ENCODE measurements at regions of chr11 and their contacts with region 1.

Region 1: DNA sequence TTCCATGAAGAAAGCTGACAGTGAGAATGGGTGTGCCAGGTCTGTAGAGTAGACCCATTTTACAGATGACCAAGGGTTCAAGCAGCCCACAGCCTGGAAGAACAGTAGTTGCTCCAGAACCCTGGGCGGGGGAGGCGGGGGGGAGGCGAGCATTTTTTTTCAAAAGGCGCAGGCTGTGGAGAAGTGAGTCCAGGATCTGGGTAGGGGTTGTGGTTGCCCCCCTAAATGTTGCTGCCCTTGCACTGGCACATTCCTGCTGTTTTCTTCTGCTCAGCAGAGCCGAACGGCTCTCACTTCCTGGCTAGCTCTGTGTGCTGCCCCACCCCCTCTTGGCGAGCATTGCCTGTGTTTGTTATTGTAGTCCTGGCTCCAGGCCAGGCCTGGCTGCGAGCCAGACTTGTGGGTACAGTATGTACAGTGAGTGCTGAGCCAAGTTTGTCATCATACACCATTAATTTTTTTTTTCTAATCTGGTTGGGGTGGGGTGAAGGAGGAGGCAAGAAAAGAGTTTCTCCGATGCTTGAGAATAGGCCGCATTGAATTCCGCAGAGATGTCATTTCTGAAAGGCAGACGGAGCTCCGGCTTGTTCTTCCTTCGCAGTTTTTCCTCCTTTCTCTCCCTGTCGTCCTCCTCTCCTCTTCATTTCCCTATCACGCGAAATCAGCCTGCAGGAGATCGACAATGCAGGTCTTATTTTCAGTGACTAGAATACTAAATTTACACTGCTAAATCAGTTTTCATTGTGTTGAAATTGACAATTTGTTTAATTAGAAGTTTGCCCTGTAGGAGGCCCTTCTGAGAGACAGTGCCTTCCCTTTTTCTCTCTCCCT is 100.5 kb downstream of the ZBTB16 start:
- DNase-seq: peak; percentile 86 to 97 (median 90)
- H3K4me3 ChIP-seq: peak overlapping the region in 45 of 59 donors; percentile 1 to 48 (median 27)
- H3K27ac ChIP-seq: peak overlapping the region; percentile 97 to 100 (median 100)
- H3K27me3 ChIP-seq: no peaks in the 10 kb centered on the region
- CTCF ChIP-seq: peak in 23 of 56 donors; percentile 5 to 32 (median 19)

Region 2: DNA sequence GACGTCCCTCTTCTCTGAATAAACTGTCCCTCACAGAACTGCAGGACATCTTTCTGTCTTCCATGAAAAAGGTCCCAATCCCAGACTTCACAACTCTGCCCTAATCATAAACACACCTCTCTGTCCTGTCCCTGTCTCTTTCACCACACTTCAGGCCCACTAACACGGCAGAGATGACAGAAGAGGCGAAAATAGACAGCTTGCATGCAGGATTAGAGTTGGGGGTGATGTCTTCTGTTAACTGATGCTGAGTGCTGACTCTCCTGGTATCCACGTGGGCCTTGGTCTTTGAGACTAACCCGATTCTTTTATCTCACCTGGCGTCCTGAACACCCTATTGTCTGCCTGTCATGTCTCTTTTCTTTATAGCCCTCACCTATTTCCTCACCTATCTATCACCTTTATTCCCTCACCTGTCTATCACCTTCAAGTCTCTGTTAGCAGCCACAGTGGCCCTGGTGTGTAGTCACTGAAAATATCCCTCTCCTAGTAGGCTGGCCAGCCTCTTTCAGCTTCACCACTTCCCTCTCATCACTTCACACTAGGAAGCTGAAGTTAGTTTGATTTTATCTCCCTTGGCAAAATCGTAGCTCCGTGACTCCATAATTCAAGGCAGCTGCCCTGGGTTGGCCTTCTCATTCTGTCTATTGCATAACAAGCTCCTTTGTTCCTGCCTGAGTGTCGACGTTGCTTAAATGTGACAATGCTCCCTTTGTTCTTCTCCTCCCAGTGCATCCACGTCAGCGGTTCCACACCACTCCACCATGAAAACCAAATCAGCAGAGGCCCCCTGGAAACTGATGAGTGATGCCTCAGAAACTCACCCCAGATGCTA is 654.3 kb before region 1 on chr11:
- intact Hi-C with region 1: no loop called
- DNase-seq: peak in 8 of 10 donors; percentile 33 to 76 (median 52)
- H3K4me3 ChIP-seq: peak overlapping the region in 3 of 59 donors; percentile 12 to 27 (median 21)
- H3K27ac ChIP-seq: peak overlapping the region in 57 of 59 donors; percentile 2 to 91 (median 71)
- H3K27me3 ChIP-seq: no peaks in the 10 kb centered on the region
- CTCF ChIP-seq: peak in 3 of 56 donors; percentile 11 to 19 (median 16)

Region 3: DNA sequence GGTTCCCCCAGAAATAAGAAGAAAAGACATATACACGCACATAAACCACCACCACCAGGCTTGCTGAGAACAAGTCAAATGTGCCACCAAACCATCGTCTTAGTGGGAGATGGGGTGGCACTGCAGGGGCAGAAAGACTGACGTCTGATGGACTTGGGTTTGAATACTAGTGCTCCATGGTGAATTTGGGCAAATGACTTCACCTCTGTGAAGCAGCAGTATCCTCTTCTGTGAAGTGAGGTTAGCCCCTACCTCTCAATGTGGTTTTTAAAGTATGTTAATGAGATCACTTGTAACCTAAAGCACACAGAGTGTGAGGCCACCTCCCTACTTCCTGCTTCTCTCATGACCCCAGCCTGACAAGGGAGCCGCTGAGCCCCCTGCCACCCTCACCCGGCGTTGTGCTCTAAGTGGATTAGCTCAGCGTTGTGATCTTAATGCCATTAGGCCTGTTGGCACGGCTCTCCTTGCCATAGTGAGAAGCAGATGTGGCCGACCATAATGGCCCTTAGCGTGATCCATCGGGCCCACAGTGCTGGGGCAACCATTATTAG is 86.1 kb before region 1 on chr11:
- intact Hi-C with region 1: no loop called
- DNase-seq: no peak
- H3K4me3 ChIP-seq: peak overlapping the region in 39 of 59 donors; percentile 0 to 52 (median 30)
- H3K27ac ChIP-seq: peak overlapping the region in 54 of 59 donors; percentile 7 to 93 (median 60)
- H3K27me3 ChIP-seq: no peaks in the 10 kb centered on the region
- CTCF ChIP-seq: no peak

Region 4: GRCh38 chr11:114135737-114136151 is 24.3 kb before region 1 on chr11:
- intact Hi-C with region 1: loop called in 1 of 2 experiments (anchors 2 kb)
- DNase-seq: peak in 1 of 10 donors; percentile 35
- H3K4me3 ChIP-seq: peak overlapping the region in 3 of 59 donors; percentile 2 to 34 (median 3)
- H3K27ac ChIP-seq: peak overlapping the region in 50 of 59 donors; percentile 1 to 94 (median 70)
- H3K27me3 ChIP-seq: no peaks in the 10 kb centered on the region
- CTCF ChIP-seq: no peak

Region 5: GRCh38 chr11:114228435-114229411 is 68.7 kb after region 1 on chr11:
- intact Hi-C with region 1: no loop called
- DNase-seq: peak in 3 of 10 donors; percentile 30 to 50 (median 42)
- H3K4me3 ChIP-seq: peak overlapping the region in 15 of 59 donors; percentile 1 to 38 (median 14)
- H3K27ac ChIP-seq: peak overlapping the region in 51 of 59 donors; percentile 0 to 78 (median 48)
- H3K27me3 ChIP-seq: no peaks in the 10 kb centered on the region
- CTCF ChIP-seq: no peak

Region 6: DNA sequence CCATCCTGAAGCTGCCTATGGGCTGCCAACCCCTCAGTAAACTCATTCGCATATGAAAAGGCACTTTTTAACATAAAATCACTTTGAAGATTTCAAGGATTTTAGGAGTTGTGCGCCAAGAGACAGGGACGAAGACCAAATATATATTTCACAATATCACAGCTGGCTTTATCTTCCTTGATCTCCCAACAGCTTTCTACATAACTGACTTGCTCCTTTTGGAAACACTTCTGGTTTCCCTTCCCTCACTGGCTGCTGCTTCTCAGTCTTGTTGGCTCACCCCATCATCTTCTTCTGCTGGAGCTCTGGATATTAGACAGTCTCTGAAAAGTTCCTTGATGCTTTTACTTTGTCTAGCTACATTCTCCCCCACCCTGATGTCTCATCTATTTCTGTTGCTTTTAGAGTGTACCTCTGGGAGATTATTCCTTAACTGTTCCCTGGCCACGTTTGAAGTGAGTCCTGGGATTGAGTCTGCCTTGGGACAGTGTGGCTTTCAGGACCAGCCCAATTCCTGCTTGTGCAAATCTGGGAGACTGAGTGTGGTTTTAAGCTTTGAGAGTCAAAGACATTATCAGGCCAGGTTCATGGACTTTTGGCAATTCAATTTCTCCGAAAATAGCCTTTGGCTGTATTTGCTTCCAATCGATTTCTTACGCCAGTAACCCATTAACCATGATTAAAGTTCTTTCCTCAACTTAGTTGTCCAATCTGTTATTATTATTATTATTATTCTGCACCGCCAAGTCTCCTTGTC is 105.3 kb after region 1 on chr11:
- intact Hi-C with region 1: no loop called
- DNase-seq: no peak
- H3K4me3 ChIP-seq: no peak overlapping the region
- H3K27ac ChIP-seq: no peak overlapping the region
- H3K27me3 ChIP-seq: peaks cover 0 to 2% (median 0%) of the 10 kb centered on the region in 45 donors
- CTCF ChIP-seq: no peak

Measured in dorsolateral prefrontal cortex (tissue), 120 donors.